Heart right ventricle (tissue), 16 donors: ENCODE measurements at regions of chr2 and their contacts with region 1.

Region 1: DNA sequence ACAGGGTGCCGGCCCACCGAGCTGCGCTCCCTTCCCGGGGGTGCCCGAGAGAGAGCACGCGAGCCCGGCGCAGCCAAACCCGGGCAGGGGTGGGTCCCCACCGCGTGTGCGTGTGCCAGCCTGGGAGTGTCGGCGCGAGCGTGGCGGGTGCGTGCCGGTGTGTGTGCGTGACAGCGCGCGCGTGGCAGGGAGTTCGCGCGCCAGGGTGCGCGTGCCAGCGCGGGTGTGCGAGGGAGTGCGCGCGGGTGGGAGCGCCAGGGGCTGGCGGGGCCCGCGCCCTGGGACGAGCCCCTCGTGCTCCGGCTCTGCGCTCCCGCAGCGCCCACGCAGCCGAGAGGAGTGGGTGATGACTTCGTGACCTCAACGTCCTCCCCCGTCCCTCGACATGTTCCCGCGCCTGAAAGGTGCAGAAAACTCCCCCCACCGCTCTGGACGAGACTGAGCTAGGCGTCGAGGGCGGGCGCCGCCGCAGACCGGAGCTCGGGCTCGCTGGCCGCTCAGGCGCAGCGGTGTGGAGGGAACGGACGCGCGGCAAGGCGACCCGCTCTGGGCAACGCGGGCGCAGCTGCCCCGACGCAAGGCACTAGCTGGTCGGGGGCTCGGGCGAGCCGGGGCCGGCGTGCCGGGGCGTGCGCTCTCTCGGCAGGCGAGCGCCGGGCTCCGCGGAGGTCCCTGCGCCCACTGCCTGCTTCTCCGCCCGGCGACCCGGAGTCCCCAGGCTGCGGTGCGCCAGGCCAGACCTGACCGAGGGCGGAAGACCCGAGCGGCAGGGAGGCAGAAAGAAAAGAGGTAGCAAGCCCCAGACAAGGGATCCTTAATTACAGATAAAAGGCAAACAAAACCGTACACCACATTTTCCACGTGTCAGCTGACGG is 582.8 kb downstream of the ZEB2 start:
- DNase-seq: peak; percentile 10 to 35
- ATAC-seq: peak; percentile 60 to 82 (median 76)
- H3K4me3 ChIP-seq: peak overlapping the region; percentile 27 to 64 (median 58)
- H3K27ac ChIP-seq: peak overlapping the region in 9 of 10 donors; percentile 11 to 81 (median 62)
- H3K4me1 ChIP-seq: peaks cover 0 to 22% (median 0%) of the 10 kb centered on the region in 9 donors
- H3K27me3 ChIP-seq: peaks cover 0 to 40% (median 6%) of the 10 kb centered on the region in 7 donors
- CTCF ChIP-seq: no peak

Region 2: DNA sequence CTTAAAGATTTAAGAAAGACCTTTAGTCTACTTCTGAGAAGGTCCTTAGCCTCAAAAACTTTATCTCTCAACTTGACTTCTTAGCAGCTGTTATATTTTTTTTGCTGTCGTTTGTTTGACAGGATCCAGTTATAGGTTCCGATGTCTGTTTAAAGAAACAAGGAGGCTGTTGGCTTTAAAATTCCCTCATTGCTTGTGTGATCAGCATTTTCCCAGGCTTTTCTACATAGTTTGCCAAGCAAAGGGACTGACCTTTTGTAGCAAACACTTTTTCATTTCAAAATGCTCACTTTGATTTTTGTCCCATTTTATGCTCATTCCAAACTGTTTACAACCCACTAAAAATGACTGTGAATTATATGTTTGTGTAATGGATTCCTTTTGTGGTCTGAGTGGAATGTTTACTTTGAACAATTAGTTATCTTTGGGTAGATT is 412.9 kb before region 1 on chr2:
- intact Hi-C with region 1: loop called in 1 of 10 experiments (anchors 10 kb)
- DNase-seq: no peak
- ATAC-seq: peak in 5 of 8 donors; percentile 6 to 60 (median 52)
- H3K4me3 ChIP-seq: no peak overlapping the region
- H3K27ac ChIP-seq: peak overlapping the region in 8 of 10 donors; percentile 1 to 55 (median 48)
- H3K4me1 ChIP-seq: peaks cover 0 to 50% (median 12%) of the 10 kb centered on the region in 9 donors
- H3K27me3 ChIP-seq: no peaks in the 10 kb centered on the region
- CTCF ChIP-seq: no peak

Region 3: GRCh38 chr2:143885461-143885860 is 51.6 kb before region 1 on chr2:
- intact Hi-C with region 1: loop called in 1 of 10 experiments (anchors 2 kb)
- DNase-seq: no peak
- ATAC-seq: no peak
- H3K4me3 ChIP-seq: no peak overlapping the region
- H3K27ac ChIP-seq: no peak overlapping the region
- H3K4me1 ChIP-seq: no peaks in the 10 kb centered on the region
- H3K27me3 ChIP-seq: no peaks in the 10 kb centered on the region
- CTCF ChIP-seq: no peak